ENCODE measurements at regions of chr5 and their contacts with region 1.

Region 1: GRCh38 chr5:59034498-59035186 is 451.8 kb downstream of the RAB3C start:
- DNase-seq: no peak
- ATAC-seq: peak; percentile 59
- H3K4me3 Mint-ChIP-seq: no peak overlapping the region
- H3K27ac Mint-ChIP-seq: no peak overlapping the region
- H3K4me1 Mint-ChIP-seq: peaks cover 12% of the 10 kb centered on the region; the same call in 1 of the 2 replicates
- H3K27me3 Mint-ChIP-seq: peaks cover 27% of the 10 kb centered on the region
- CTCF ChIP-seq: peak; percentile 25; the same call in 1 of the 2 replicates

Region 2: GRCh38 chr5:59174248-59174844 is 139.7 kb after region 1 on chr5:
- CTCF ChIA-PET with region 1: interaction called, 12 read pairs
- POLR2A ChIA-PET with region 1: no interaction called
- DNase-seq: no peak
- ATAC-seq: peak; percentile 82
- H3K4me3 Mint-ChIP-seq: no peak overlapping the region
- H3K27ac Mint-ChIP-seq: no peak overlapping the region
- H3K4me1 Mint-ChIP-seq: no peaks in the 10 kb centered on the region
- H3K27me3 Mint-ChIP-seq: no peaks in the 10 kb centered on the region
- CTCF ChIP-seq: peak; percentile 60

Region 3: DNA sequence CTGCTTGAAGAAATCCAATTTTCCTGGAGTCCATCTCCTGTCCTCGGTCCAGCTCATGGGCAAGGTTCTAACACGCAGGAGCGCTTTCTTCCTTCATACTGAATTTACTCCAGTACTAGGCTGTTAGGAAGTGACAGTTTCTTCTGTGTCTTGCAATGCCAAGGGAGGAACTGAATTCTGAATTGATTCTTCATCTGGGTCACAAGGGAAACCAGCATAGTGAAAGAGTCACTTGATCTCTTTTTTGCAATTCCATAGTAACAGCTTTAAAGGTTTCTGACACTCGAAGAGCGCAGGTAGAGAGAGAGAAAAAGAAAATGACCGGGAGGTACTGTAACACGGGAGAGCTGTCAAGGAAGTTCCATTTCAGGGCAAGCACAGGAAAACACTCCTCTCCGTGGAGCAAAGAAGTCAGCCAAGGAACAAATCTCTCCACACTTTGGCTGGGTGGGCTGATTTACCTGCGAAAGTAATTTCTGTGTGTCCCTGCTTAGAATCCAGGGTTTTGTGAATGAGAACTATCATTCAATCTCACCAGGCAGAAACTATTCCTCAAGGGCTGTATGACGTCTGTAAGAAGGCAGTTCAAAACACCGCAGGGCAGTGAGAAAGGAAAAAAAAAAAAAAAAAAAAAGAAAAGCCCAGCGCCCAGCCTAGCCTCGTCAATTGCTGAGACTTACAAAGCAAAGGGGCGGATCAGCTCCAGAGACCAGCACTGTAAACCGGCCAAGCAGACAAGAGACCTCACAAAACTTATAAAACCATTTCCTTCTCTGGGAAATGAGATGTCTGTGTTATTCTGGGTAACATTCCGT is 241.1 kb after region 1 on chr5:
- CTCF ChIA-PET with region 1: no interaction called
- POLR2A ChIA-PET with region 1: no interaction called
- DNase-seq: peak; percentile 23
- ATAC-seq: peak; percentile 96
- H3K4me3 Mint-ChIP-seq: peak overlapping the region; percentile 64
- H3K27ac Mint-ChIP-seq: no peak overlapping the region; the same call in 1 of the 2 replicates
- H3K4me1 Mint-ChIP-seq: peaks cover 20% of the 10 kb centered on the region
- H3K27me3 Mint-ChIP-seq: no peaks in the 10 kb centered on the region
- CTCF ChIP-seq: no peak

Region 4: GRCh38 chr5:59296317-59297264 is 261.9 kb after region 1 on chr5:
- CTCF ChIA-PET with region 1: no interaction called
- POLR2A ChIA-PET with region 1: no interaction called
- DNase-seq: no peak
- ATAC-seq: no peak
- H3K4me3 Mint-ChIP-seq: no peak overlapping the region
- H3K27ac Mint-ChIP-seq: no peak overlapping the region
- H3K4me1 Mint-ChIP-seq: no peaks in the 10 kb centered on the region
- H3K27me3 Mint-ChIP-seq: no peaks in the 10 kb centered on the region
- CTCF ChIP-seq: no peak